Motor neuron (in vitro differentiated cells): ENCODE measurements at regions of chr11 and their contacts with region 1.

Region 1: GRCh38 chr11:7665473-7666291 is 7.6 kb downstream of the CYB5R2 start:
- ATAC-seq: peak; percentile 75 to 99 (median 86)
- H3K4me3 ChIP-seq: no peak overlapping the region
- H3K27ac ChIP-seq: no peak overlapping the region
- H3K4me1 ChIP-seq: peaks cover 7 to 19% of the 10 kb centered on the region in 2 donors

Region 2: DNA sequence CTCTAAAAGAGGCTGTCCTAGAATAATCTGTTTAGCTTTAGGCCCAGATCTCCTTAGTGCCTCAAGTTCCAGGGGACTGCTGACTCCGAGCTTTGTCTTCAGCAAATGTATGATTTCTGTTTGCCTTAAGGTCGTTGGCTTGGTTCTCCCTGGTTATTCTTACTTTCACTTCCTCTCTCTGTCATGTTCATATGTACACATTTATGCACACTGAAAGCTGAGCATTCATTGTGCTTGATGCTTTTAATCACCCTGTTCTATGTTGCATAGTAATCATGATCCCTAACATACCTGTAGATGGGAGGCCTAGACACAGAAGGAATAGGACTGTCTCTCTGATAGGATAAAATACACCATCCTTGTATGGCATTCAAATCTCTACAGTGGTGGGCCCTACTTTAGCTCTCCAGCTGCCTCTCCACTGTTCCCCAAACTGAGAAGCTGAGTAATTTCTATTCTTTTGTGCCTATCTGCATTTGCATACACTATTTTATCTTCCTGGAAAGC is 144.6 kb before region 1 on chr11:
- in situ Hi-C with region 1: no loop called
- ATAC-seq: peak in 2 of 8 experiments; percentile 19 to 21
- H3K4me3 ChIP-seq: no peak overlapping the region
- H3K27ac ChIP-seq: no peak overlapping the region
- H3K4me1 ChIP-seq: no peaks in the 10 kb centered on the region

Region 3: GRCh38 chr11:7571640-7572000 is 94.1 kb before region 1 on chr11:
- in situ Hi-C with region 1: loop called in 2 of 9 experiments (anchors 25 kb)
- ATAC-seq: peak; percentile 57 to 93 (median 82)
- H3K4me3 ChIP-seq: no peak overlapping the region
- H3K27ac ChIP-seq: no peak overlapping the region
- H3K4me1 ChIP-seq: peaks cover 10 to 17% of the 10 kb centered on the region in 2 donors